SK-N-SH (cell line): ENCODE measurements at regions of chr22 and their contacts with region 1.

Region 1: GRCh38 chr22:46563381-46564083 is 26.1 kb upstream of the CELSR1 start:
- DNase-seq: peak; percentile 85
- H3K4me3 ChIP-seq: no peak overlapping the region; a peak in 1 of 4 replicates
- H3K27ac ChIP-seq: 0 out of 4 replicates have a peak overlapping the region, but pooled peaks of 1 of the 2 experiments have one; percentile 8
- H3K4me1 ChIP-seq: peaks cover 0 to 12% of the 10 kb centered on the region in 2 experiments; a peak in 1 of 4 replicates
- H3K27me3 ChIP-seq: no peaks in the 10 kb centered on the region
- CTCF ChIP-seq: peak; percentile 70
- EP300 ChIP-seq: no peak
- RAD21 ChIP-seq: peak; percentile 84

Region 2: DNA sequence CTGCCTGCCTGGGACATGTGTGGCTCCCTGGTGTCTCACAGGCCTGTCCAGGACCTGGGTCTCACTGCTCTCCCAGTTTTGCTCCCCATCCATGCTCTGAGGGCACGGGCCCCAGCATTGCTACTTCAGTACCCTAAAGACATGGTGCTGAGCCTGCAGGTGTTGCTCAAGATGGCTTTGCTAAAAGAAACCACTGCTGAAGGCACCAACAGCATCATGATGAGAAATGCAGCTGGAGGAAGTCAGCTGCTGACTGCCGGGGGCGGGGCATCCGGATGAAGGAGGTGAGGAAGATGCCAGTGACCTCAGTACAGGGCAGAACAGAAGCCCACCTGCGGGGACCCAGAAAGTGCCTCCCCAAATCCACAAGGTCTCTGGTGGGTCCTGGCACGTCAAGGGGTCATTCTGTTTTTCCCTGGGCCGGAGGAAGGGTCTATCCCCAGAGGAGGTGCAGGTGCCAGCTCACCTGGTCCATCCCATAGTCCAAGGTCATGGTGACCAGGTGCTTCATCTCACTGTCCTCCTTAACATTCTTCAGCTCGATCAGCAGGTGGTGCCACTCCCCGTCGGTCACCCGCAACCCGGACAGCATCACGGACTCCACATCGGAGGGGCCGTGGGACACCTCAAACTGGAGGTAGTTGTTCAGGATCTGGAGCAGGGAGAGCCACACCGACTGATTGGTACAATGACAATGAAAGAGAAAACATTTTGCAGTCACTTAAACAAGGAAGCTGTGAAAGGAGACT is 164.1 kb before region 1 on chr22:
- CTCF ChIA-PET with region 1: no interaction called
- POLR2A ChIA-PET with region 1: no interaction called
- DNase-seq: no peak
- H3K4me3 ChIP-seq: no peak overlapping the region
- H3K27ac ChIP-seq: no peak overlapping the region
- H3K4me1 ChIP-seq: no peaks in the 10 kb centered on the region
- H3K27me3 ChIP-seq: no peaks in the 10 kb centered on the region
- CTCF ChIP-seq: no peak
- EP300 ChIP-seq: no peak
- RAD21 ChIP-seq: no peak

Region 3: DNA sequence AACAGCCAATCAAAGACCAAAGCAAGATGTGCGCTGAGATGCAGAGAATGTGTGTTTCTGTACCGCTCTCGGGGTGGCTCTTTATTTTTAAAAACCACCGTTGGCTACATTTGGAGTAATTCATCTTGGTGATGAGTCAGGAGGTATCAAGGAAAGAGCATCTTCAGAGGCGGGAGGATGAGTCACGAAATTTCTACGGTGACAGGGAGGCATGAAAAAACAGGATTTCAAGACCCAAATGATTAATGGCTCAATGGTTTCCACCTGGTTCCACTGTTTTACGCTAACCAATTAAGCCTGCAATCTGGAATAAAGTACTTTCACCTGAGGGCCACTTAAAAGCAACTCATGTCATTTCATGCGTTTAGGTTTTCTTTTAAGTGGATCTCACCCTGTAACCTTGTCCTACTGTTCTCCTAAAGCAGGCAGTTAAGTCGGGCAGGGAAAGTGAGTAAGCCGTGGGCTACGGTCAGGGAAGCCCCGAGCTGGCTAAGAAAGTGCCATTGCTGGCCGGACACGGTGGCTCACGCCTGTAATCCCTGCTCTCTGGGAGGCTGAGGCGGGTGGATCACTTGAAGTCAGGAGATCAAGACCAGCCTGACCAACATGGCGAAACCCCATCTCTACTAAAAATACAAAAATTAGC is 100.7 kb before region 1 on chr22:
- CTCF ChIA-PET with region 1: no interaction called
- POLR2A ChIA-PET with region 1: no interaction called
- DNase-seq: no peak
- H3K4me3 ChIP-seq: no peak overlapping the region
- H3K27ac ChIP-seq: 0 out of 4 replicates have a peak overlapping the region, but pooled peaks of 1 of the 2 experiments have one; percentile 12
- H3K4me1 ChIP-seq: no peaks in the 10 kb centered on the region
- H3K27me3 ChIP-seq: no peaks in the 10 kb centered on the region
- CTCF ChIP-seq: no peak
- EP300 ChIP-seq: peak in 1 of 2 experiments; percentile 74; a peak in 2 of 4 replicates
- RAD21 ChIP-seq: no peak

Region 4: DNA sequence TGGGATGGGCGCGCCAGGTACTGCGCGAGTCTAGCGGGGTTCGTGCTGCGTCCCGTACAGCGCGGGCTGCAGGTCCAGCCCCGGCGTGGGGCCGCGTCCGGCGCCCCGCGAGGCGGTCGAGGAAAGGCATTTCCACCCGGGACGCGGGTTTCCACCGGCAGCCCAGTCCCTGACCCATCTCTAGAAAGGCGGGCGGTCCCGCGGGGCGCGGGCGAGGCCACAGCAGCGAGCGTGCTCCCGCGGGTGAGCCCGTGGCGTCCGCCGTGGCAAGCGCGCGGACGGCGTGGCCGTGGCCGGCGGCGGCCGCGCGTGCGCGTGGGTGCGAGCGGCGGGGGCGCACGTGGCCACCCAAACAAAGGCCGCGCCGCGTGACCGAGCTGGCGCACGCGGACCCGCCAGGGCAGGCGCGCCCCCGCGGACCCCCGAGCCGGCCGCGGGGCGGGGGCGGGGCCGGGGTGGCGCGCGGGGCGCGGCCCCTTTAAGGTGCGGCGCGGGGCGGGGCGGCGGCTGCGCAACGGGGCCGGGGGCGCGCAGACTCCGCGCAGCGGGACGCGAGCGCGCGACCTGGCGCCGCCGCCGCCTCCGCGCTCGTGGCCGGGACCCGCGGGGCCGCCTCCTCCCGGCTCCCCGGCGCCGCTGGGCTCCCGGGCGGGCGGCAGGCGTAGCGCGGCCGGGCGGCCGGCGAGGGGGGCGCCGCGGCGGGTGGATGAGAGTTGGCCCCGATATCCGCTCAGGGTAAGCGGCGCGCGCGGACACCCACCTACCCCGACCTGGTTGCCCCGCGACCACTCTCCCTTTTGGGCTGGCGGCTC is 13.2 kb after region 1 on chr22:
- CTCF ChIA-PET with region 1: interaction called, 17 read pairs
- POLR2A ChIA-PET with region 1: no interaction called
- DNase-seq: peak; percentile 95
- H3K4me3 ChIP-seq: peak overlapping the region; percentile 44 to 76; a peak in 3 of 4 replicates
- H3K27ac ChIP-seq: peak overlapping the region in 1 of 2 experiments; percentile 79; a peak in 2 of 4 replicates
- H3K4me1 ChIP-seq: peaks cover 0 to 46% of the 10 kb centered on the region in 2 experiments; a peak in 3 of 4 replicates
- H3K27me3 ChIP-seq: no peaks in the 10 kb centered on the region
- CTCF ChIP-seq: no peak
- EP300 ChIP-seq: no peak
- RAD21 ChIP-seq: no peak

Region 5: DNA sequence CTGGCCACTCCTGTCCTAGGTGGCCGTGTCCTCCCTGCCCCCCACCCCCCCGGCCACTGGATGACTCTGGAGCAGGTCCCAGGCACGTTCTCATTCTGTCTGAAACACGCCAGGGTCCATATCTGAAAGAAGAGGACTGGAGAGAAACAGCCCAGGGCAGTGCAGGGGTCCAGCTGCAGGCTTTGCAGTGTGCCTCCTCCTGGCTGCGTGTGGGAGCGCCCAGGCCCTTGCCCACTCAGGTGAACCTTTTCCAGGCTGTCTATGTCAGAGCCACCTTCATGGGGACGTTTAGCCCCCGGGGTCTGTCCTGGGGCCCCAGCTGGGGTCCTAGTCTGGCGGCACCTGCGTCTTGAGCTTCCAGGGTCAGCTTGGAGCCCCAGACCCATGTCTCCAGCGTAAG is 72.2 kb after region 1 on chr22:
- CTCF ChIA-PET with region 1: interaction called, 22 read pairs
- POLR2A ChIA-PET with region 1: no interaction called
- DNase-seq: no peak
- H3K4me3 ChIP-seq: no peak overlapping the region
- H3K27ac ChIP-seq: no peak overlapping the region
- H3K4me1 ChIP-seq: peaks cover 0 to 12% of the 10 kb centered on the region in 2 experiments; a peak in 1 of 4 replicates
- H3K27me3 ChIP-seq: no peaks in the 10 kb centered on the region
- CTCF ChIP-seq: no peak
- EP300 ChIP-seq: no peak
- RAD21 ChIP-seq: no peak

Region 6: GRCh38 chr22:46672731-46673130 is 109.2 kb after region 1 on chr22:
- CTCF ChIA-PET with region 1: interaction called, 76 read pairs
- POLR2A ChIA-PET with region 1: interaction called, 3 read pairs
- DNase-seq: no peak
- H3K4me3 ChIP-seq: no peak overlapping the region
- H3K27ac ChIP-seq: no peak overlapping the region
- H3K4me1 ChIP-seq: no peaks in the 10 kb centered on the region; a peak in 1 of 4 replicates
- H3K27me3 ChIP-seq: no peaks in the 10 kb centered on the region
- CTCF ChIP-seq: no peak
- EP300 ChIP-seq: no peak
- RAD21 ChIP-seq: no peak

Region 7: GRCh38 chr22:46726066-46726985 is 162.8 kb after region 1 on chr22:
- CTCF ChIA-PET with region 1: interaction called, 16 read pairs
- POLR2A ChIA-PET with region 1: interaction called, 5 read pairs
- DNase-seq: peak; percentile 76
- H3K4me3 ChIP-seq: no peak overlapping the region
- H3K27ac ChIP-seq: peak overlapping the region in 1 of 2 experiments; percentile 59; a peak in 2 of 4 replicates
- H3K4me1 ChIP-seq: peaks cover 0 to 51% of the 10 kb centered on the region in 2 experiments; a peak in 1 of 4 replicates
- H3K27me3 ChIP-seq: no peaks in the 10 kb centered on the region
- CTCF ChIP-seq: no peak
- EP300 ChIP-seq: peak in 1 of 2 experiments; percentile 31; a peak in 1 of 4 replicates
- RAD21 ChIP-seq: no peak

Region 8: DNA sequence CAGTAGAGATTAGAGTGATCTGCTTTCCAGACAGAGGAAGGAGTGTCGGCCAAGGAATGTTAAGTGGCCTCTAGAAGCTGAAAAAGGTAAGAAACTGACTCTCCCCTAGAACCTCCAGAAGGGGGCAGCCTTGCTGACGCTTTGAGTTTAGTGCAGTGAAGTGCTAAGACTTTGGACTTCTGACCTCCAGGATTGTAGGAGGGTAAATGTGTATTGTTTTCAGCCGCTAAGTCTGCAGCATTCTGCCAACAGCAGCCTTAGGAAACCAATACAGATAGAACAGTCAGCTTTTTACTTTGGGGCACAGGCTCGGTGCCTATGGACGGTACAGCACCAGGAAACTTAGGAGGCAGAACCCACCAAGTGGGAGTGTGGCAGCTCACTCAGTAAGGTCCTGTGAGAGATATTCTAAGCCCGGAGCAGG is 195.3 kb after region 1 on chr22:
- CTCF ChIA-PET with region 1: interaction called, 22 read pairs
- POLR2A ChIA-PET with region 1: interaction called, 5 read pairs
- DNase-seq: peak; percentile 50
- H3K4me3 ChIP-seq: no peak overlapping the region
- H3K27ac ChIP-seq: no peak overlapping the region
- H3K4me1 ChIP-seq: peaks cover 14 to 23% of the 10 kb centered on the region in 2 experiments; a peak in 3 of 4 replicates
- H3K27me3 ChIP-seq: no peaks in the 10 kb centered on the region
- CTCF ChIP-seq: peak; percentile 75
- EP300 ChIP-seq: no peak
- RAD21 ChIP-seq: peak; percentile 61